ENCODE measurements at regions of chr1 and their contacts with region 1.

Region 1: DNA sequence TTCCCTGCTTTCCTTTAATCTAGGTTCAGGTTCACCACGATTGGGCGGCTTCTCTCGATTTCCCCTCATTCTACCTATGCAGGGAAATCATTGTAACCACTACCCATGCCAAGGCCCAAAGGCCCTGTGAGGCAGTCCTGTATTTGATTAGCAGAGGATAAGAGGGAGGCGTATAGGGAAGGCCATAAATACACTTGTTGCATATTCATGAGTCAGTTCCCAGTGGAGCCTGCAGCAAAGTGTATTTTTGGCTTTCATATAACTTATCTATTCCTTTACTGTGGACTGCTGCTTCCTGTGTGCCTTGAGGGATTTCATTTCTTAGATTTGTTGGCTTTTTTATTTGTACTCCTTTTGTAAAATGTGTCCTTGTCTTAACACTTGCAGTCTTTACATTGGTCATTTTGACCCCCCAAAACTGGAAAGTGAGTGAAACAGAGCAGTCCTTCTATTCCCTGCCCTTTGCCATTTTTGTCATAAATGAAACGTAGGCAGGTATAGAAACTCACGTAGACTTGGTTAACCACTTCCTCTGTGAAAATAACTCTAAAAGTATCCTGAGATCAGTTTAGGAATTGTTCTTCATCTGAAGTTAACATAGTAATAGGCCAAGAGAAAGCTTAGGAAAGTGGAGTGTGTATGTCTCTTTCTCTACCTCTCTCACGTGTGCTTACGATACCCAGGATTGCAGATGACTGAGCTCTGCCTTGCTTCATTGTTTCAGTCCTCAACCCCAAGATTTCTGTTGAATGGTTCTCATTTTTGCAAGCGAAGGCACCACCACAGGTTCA is 19.6 kb upstream of the KCNQ4 start:
- DNase-seq: no peak
- ATAC-seq: no peak
- H3K4me3 ChIP-seq: no peak overlapping the region
- H3K27ac ChIP-seq: no peak overlapping the region
- H3K4me1 ChIP-seq: no peaks in the 10 kb centered on the region
- H3K27me3 ChIP-seq: no peaks in the 10 kb centered on the region
- CTCF ChIP-seq: no peak

Region 2: DNA sequence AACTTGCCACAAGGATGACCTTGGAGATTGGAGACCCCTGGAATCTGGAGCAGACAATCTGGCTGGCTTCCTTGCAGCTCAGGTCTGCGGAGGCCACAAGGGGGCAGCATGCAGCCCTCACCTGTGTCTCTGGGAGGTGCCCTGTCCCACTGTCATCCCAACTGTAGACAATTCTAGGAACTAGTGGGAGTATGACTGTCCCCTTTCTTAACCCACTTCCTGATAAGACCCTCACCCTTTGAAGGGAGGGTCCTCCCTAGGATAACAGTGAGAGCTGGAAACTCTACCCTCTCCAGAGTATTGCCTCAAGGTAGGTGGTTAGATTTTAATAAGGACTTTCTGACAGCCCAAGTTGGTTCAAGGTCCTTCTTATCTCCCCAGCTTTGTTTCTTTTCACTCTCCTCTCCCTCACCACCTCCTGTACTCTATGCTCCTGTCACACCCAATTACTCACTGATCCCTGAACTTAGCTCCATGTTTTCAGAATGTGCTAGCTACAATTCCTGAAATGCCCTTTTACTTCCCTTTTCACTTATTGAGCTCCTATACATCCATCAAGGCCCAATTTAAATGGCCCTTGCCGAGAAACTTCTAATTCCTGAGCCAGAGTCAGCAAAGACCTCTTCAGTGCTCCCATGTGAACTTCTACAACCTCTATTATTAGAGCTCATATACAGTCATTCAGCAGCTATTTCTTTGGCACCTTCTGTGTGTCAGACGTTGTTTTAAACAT is 10.5 kb after region 1 on chr1:
- CTCF ChIA-PET with region 1: interaction called, 4 read pairs
- POLR2A ChIA-PET with region 1: interaction called, 11 read pairs
- in situ Hi-C with region 1: no loop called
- intact Hi-C with region 1: no loop called
- DNase-seq: peak; percentile 47
- ATAC-seq: peak; percentile 82
- H3K4me3 ChIP-seq: no peak overlapping the region
- H3K27ac ChIP-seq: no peak overlapping the region
- H3K4me1 ChIP-seq: no peaks in the 10 kb centered on the region
- H3K27me3 ChIP-seq: no peaks in the 10 kb centered on the region
- CTCF ChIP-seq: peak; percentile 93